Activated CD4-positive, alpha-beta T cell treated with anti-CD3 and anti-CD28 coated beads for 36 hours (primary cell): ENCODE measurements at regions of chr20 and their contacts with region 1.

Region 1: GRCh38 chr20:32509639-32510066 is 75.5 kb downstream of the NOL4L start:
- DNase-seq: peak; percentile 77
- ATAC-seq: peak; percentile 68
- H3K4me3 Mint-ChIP-seq: peak overlapping the region; percentile 70
- H3K27ac Mint-ChIP-seq: peak overlapping the region; percentile 90
- H3K4me1 Mint-ChIP-seq: peaks cover 86% of the 10 kb centered on the region
- H3K27me3 Mint-ChIP-seq: no peaks in the 10 kb centered on the region

Region 2: GRCh38 chr20:32336918-32337347 is 172.7 kb before region 1 on chr20:
- CTCF ChIA-PET with region 1: no interaction called
- POLR2A ChIA-PET with region 1: no interaction called
- intact Hi-C with region 1: no loop called
- DNase-seq: no peak
- ATAC-seq: no peak
- H3K4me3 Mint-ChIP-seq: no peak overlapping the region
- H3K27ac Mint-ChIP-seq: no peak overlapping the region
- H3K4me1 Mint-ChIP-seq: peaks cover 41% of the 10 kb centered on the region
- H3K27me3 Mint-ChIP-seq: no peaks in the 10 kb centered on the region

Region 3: DNA sequence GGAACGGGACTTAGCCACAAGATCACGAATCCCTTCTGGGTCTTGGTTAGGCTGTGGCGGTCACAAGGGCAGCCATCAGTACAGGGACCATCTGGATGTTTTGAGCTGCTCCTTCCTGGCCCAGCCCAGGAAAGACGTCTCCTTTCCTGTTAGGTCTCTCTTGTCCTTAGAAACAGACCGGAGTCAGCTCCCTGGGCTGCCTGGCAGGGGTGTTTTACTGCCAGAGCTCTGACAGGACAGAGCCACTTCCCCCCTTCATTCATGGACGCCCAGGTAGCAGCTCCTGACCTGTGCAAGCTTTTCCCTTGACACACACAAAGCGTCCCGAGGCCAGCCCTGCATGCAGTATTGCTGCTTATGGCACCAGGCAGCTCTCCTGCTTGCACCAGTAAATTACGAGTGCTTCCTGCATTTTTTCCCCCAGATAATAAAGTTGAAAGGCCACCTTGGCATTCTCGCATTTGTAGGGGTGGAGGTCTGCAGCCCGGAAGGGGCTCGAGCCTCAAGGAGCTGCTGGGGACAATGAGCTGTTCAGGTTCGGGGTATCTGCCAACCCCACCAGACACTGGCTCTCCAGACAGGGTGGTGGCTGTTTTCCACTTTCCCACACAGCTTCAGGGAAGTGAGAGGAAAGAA is 11.9 kb before region 1 on chr20:
- CTCF ChIA-PET with region 1: interaction called, 16 read pairs
- POLR2A ChIA-PET with region 1: no interaction called
- intact Hi-C with region 1: no loop called
- DNase-seq: no peak
- ATAC-seq: no peak
- H3K4me3 Mint-ChIP-seq: no peak overlapping the region
- H3K27ac Mint-ChIP-seq: no peak overlapping the region
- H3K4me1 Mint-ChIP-seq: peaks cover 34% of the 10 kb centered on the region
- H3K27me3 Mint-ChIP-seq: no peaks in the 10 kb centered on the region